ENCODE measurements at regions of chr12 and their contacts with region 1.

Region 1: DNA sequence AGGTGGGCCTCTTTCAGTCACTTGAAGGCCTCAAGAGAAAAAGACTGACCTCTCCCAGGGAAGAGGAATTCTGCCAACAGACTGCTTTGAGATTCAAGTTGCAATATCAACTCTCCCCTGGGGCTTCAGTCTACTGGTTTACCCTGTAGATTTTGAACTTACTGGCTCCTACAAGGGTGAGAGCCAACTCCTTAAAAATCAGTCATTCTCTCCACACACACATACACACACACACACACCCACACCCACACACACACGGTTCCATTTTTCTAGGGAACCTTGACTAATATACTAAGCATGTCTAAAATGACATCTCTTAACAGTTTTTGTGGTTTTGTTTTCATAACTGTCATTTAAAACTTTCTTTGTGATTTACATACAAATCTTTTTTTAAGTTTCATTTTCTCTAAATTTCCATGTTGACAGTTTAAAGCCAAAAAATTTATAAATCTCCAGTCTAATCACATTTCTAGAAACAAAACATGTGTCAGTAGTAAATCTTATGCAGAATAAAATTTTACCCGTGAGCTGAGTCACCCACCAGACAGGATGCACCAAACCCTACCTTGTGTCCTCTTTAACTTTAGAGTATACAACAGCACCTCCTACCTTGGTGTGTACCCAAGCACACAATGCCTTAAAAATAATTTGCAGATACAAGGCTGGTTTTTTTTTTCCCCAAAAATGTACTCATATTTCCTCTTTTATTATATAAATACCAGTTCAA is 394.6 kb downstream of the AEBP2 start:
- DNase-seq: no peak
- H3K4me3 Mint-ChIP-seq: no peak overlapping the region
- H3K27ac Mint-ChIP-seq: peak overlapping the region; percentile 75
- H3K4me1 Mint-ChIP-seq: peaks cover 37% of the 10 kb centered on the region
- H3K27me3 Mint-ChIP-seq: no peaks in the 10 kb centered on the region

Region 2: GRCh38 chr12:19572920-19573558 is 260.9 kb before region 1 on chr12:
- intact Hi-C with region 1: loop called (anchors 10 kb)
- DNase-seq: peak; percentile 16
- H3K4me3 Mint-ChIP-seq: no peak overlapping the region
- H3K27ac Mint-ChIP-seq: no peak overlapping the region
- H3K4me1 Mint-ChIP-seq: peaks cover 4% of the 10 kb centered on the region
- H3K27me3 Mint-ChIP-seq: no peaks in the 10 kb centered on the region

Region 3: GRCh38 chr12:19739183-19739776 is 94.7 kb before region 1 on chr12:
- intact Hi-C with region 1: loop called (anchors 2 kb)
- DNase-seq: no peak
- H3K4me3 Mint-ChIP-seq: no peak overlapping the region
- H3K27ac Mint-ChIP-seq: no peak overlapping the region
- H3K4me1 Mint-ChIP-seq: no peaks in the 10 kb centered on the region
- H3K27me3 Mint-ChIP-seq: peaks cover 4% of the 10 kb centered on the region

Region 4: GRCh38 chr12:19792028-19792427 is 41.9 kb before region 1 on chr12:
- intact Hi-C with region 1: loop called (anchors 5 kb)
- DNase-seq: no peak
- H3K4me3 Mint-ChIP-seq: no peak overlapping the region
- H3K27ac Mint-ChIP-seq: peak overlapping the region; percentile 38
- H3K4me1 Mint-ChIP-seq: peaks cover 29% of the 10 kb centered on the region
- H3K27me3 Mint-ChIP-seq: no peaks in the 10 kb centered on the region

Region 5: DNA sequence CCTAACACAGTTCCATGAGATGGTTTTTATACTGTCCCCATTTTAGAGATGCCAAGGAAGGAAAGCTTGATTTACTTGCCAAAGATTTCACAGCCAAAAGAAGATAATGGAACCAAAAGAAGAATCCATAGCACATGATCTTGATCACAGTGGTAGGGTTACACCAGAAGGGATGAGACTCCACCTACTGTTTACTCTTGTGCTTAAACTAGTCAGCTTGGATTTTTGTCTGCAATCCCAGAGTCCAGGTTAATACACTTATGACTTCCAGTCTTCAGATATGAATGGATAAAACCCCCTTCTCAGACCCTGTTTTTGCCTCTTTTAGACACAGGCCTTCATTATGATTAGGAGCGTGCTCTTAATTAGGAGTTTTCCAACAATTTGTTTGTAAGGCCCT is 59.6 kb after region 1 on chr12:
- intact Hi-C with region 1: loop called (anchors 1 kb)
- DNase-seq: no peak
- H3K4me3 Mint-ChIP-seq: no peak overlapping the region
- H3K27ac Mint-ChIP-seq: no peak overlapping the region
- H3K4me1 Mint-ChIP-seq: peaks cover 12% of the 10 kb centered on the region
- H3K27me3 Mint-ChIP-seq: peaks cover 3% of the 10 kb centered on the region

Measured in activated T-helper 2 cell treated with anti-CD3 and anti-CD28 coated beads, Interferon-gamma antibody, Interleukin-2, Interleukin-4, amounts not matched to agents 10 μg/mL and 5 μg/mL and 100 μg/mL, durations not matched to agents 14 hours and 24 hours and 36 hours (primary cell).